ENCODE measurements at regions of chr6 and their contacts with region 1.

Region 1: DNA sequence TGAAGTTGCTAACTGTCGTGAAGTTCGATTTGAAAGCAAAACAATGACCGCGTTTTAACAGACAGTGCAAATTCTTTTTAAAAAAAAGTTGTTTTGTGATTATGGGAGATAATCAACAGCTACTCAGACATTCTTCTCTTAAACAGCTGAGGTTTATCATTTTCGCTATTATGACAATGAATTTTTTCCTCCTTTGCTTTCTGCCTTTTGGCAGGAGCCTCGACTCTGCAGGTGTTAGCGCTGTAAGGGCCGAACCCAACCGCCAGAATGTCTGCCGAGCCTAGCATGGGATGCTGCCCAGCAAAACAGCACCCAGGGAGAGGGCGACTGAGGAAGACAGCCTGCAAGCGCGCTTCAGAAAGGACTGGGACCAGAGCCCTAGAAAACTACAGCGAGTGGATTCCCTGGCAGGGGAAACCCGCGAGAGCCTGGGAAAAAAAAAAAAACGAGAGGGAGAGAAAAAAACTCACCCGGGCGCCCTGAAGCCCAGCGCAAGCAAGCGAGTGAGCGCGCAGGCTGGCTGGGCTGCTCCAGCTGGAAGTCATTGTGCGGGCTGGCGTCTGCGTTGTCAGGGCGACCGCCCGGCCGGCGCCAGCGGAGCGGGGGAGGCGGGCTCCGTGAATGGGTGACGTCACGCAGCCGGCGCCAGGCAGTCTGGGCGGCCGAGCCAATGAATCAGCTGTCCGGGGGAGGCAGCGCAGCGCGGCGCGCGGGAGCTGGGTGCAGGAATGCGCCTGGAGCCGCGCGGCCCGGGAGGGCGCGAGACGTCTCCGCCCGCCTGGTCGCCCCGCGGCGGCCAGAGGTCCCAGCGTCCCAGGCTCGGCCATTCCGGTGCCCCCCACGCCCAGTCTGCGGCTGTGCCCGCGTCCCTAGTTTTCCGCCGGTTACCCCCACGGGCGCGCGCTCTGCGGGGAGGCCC is 32.7 kb upstream of the ID4 start:
- DNase-seq: peak; percentile 96 to 97 (median 97)
- ATAC-seq: peak; percentile 98 to 100 (median 99)
- H3K4me3 ChIP-seq: peak overlapping the region; percentile 12 to 67 (median 58)
- H3K27ac ChIP-seq: peak overlapping the region; percentile 82 to 99 (median 92)
- H3K4me1 ChIP-seq: peaks cover 0 to 28% (median 7%) of the 10 kb centered on the region in 12 donors
- H3K27me3 ChIP-seq: peaks cover 0 to 12% (median 0%) of the 10 kb centered on the region in 9 donors
- CTCF ChIP-seq: peak in 1 of 12 donors; percentile 9
- POLR2A ChIP-seq: peak; percentile 36 to 88

Region 2: DNA sequence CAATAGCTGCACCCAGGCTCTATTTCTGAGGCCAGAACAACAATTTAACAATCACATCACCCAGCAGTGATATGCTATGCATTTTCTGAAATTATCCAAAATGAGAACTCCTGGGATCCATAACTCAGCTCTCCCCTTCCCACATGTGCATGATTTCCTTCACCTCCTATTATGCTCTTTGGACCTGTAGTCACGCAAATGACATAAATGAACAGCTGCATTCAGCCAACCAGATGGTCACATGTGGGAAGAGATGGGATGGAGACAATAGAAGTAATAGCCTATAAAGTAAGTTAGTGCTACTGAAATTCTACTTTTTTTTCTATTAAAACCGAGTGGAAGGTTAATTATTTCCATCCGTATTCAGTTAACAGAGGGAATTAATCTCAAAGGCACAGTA is 629.4 kb before region 1 on chr6:
- intact Hi-C with region 1: no loop called
- DNase-seq: no peak
- ATAC-seq: no peak
- H3K4me3 ChIP-seq: no peak overlapping the region
- H3K27ac ChIP-seq: no peak overlapping the region
- H3K4me1 ChIP-seq: peaks cover 0 to 2% (median 0%) of the 10 kb centered on the region in 12 donors
- H3K27me3 ChIP-seq: no peaks in the 10 kb centered on the region
- CTCF ChIP-seq: no peak
- POLR2A ChIP-seq: no peak

Region 3: GRCh38 chr6:19417713-19418112 is 386.8 kb before region 1 on chr6:
- intact Hi-C with region 1: no loop called
- DNase-seq: no peak
- ATAC-seq: no peak
- H3K4me3 ChIP-seq: no peak overlapping the region
- H3K27ac ChIP-seq: no peak overlapping the region
- H3K4me1 ChIP-seq: no peaks in the 10 kb centered on the region
- H3K27me3 ChIP-seq: no peaks in the 10 kb centered on the region
- CTCF ChIP-seq: no peak
- POLR2A ChIP-seq: no peak

Region 4: GRCh38 chr6:19836799-19837510 is 32.5 kb after region 1 on chr6 and contains the start of gene ID4:
- intact Hi-C with region 1: loop called in 2 of 10 experiments (anchors 2 kb)
- DNase-seq: peak; percentile 91 to 95 (median 94)
- ATAC-seq: peak; percentile 95 to 97 (median 96)
- H3K4me3 ChIP-seq: peak within 1 kb of the TSS; percentile 57 to 84 (median 62)
- H3K27ac ChIP-seq: peak within 1 kb of the TSS; percentile 28 to 89 (median 73)
- H3K4me1 ChIP-seq: peaks cover 0 to 19% (median 7%) of the 10 kb centered on the region in 12 donors
- H3K27me3 ChIP-seq: peaks cover 0 to 61% (median 5%) of the 10 kb centered on the region in 9 donors
- CTCF ChIP-seq: no peak
- POLR2A ChIP-seq: peak; percentile 81 to 95
- total RNA-seq, gene ID4: 1.5 to 29.6 (median 2.7) TPM

Measured in heart left ventricle (tissue), 16 donors.